ENCODE measurements at regions of chr10 and their contacts with region 1.

Region 1: GRCh38 chr10:121900443-121901174 is 27.2 kb downstream of the ATE1 start:
- DNase-seq: peak; percentile 78
- H3K4me3 ChIP-seq: no peak overlapping the region
- H3K27ac ChIP-seq: no peak overlapping the region
- H3K4me1 ChIP-seq: no peaks in the 10 kb centered on the region
- H3K27me3 ChIP-seq: no peaks in the 10 kb centered on the region
- CTCF ChIP-seq: peak; percentile 43 to 47
- POLR2A ChIP-seq: no peak

Region 2: GRCh38 chr10:120948889-120949608 is 951.6 kb before region 1 on chr10:
- CTCF ChIA-PET with region 1: interaction called, 141 read pairs
- POLR2A ChIA-PET with region 1: no interaction called
- dilution Hi-C with region 1: no loop called
- intact Hi-C with region 1: loop called (anchors 1 kb)
- DNase-seq: peak; percentile 66
- H3K4me3 ChIP-seq: peak overlapping the region in 2 of 3 experiments; percentile 31 to 36
- H3K27ac ChIP-seq: no peak overlapping the region
- H3K4me1 ChIP-seq: peaks cover 9% of the 10 kb centered on the region
- H3K27me3 ChIP-seq: peaks cover 21 to 28% of the 10 kb centered on the region in 2 experiments
- CTCF ChIP-seq: peak; percentile 85 to 91
- POLR2A ChIP-seq: no peak

Region 3: DNA sequence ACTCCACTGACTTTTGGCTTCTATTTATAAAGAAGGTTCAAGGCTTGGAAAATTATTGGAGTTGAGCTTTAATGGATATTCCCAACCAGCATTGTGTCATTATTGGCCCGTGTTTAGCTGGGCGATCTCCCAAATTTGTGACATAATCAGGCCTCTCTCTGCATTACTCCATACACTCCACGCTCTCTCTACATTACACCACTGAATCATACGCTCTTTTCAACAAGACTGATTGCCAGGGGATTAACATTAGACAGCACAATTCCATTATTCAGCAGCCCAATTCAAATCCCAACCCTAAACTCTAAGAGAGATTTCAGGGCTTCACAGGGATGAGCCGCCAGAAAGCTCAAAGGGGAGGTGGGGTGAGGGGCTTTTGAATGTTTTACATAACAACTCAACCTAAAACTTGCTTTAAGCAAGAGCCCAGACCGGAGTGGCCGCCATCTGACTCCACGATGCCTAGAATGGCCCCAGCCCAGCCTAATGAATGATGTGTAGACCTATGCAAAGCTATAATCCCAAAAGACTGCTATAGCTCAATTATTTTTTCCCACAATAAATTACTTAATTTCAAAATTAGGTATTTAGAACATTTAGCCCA is 364.2 kb before region 1 on chr10:
- CTCF ChIA-PET with region 1: no interaction called
- POLR2A ChIA-PET with region 1: no interaction called
- dilution Hi-C with region 1: no loop called
- intact Hi-C with region 1: no loop called
- DNase-seq: no peak
- H3K4me3 ChIP-seq: no peak overlapping the region
- H3K27ac ChIP-seq: no peak overlapping the region
- H3K4me1 ChIP-seq: peaks cover 5% of the 10 kb centered on the region
- H3K27me3 ChIP-seq: no peaks in the 10 kb centered on the region
- CTCF ChIP-seq: no peak
- POLR2A ChIP-seq: no peak

Region 4: GRCh38 chr10:121823993-121824463 is 76.6 kb before region 1 on chr10:
- CTCF ChIA-PET with region 1: interaction called, 17 read pairs
- POLR2A ChIA-PET with region 1: no interaction called
- dilution Hi-C with region 1: no loop called
- intact Hi-C with region 1: no loop called
- DNase-seq: peak; percentile 54
- H3K4me3 ChIP-seq: no peak overlapping the region
- H3K27ac ChIP-seq: no peak overlapping the region
- H3K4me1 ChIP-seq: no peaks in the 10 kb centered on the region
- H3K27me3 ChIP-seq: no peaks in the 10 kb centered on the region
- CTCF ChIP-seq: peak; percentile 40 to 59
- POLR2A ChIP-seq: no peak

Region 5: GRCh38 chr10:121886997-121887622 is 13.5 kb before region 1 on chr10:
- CTCF ChIA-PET with region 1: interaction called, 29 read pairs
- POLR2A ChIA-PET with region 1: no interaction called
- dilution Hi-C with region 1: no loop called
- intact Hi-C with region 1: no loop called
- DNase-seq: peak; percentile 76
- H3K4me3 ChIP-seq: no peak overlapping the region
- H3K27ac ChIP-seq: no peak overlapping the region
- H3K4me1 ChIP-seq: peaks cover 6% of the 10 kb centered on the region
- H3K27me3 ChIP-seq: no peaks in the 10 kb centered on the region
- CTCF ChIP-seq: peak; percentile 82 to 85
- POLR2A ChIP-seq: no peak

Measured in endothelial cell of umbilical vein (primary cell).